MCF 10A (cell line): ENCODE measurements at regions of chr6 and their contacts with region 1.

Region 1: DNA sequence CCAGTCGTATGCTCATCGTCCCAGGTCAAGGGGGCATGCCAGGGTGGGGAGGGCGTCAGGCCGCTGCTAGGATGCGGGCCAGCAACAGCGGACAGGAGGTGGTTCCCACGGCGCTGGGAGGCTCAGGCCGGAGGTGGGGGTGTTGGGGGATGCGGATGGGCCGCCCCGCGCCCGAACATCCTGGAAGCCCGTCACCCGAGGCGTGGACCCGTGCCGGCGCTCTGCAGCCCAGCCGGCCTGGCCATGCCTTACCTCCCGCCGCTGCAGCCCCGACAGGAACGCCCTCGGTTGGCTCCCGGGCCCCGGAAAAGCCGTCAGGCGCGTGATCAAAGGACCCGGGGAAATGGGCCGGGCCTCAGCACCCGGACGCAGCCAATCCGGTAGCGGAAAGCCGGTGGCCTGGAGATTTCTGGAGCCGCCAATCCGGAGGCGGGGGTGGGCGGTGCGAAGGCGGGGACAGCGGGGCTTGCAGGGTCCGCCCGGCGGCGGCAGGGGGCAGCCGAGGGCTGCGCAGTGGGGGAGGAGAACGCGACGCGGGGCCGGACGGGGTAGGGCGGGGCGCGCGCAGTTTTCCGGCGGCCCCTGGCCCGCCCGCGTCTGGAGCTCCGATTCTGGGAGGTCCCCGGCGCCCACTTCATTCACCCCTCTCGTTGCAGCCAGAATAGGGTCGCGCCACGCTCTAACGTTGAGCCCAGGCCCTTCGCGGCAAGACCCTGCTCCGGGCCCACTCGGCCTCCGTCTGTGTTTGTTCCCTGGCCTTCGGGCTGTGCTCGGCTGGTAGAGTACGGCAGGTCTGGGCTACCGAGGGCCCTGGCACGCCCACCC is at the start of gene SMIM29:
- DNase-seq: peak; percentile 95
- H3K4me3 Mint-ChIP-seq: peak within 1 kb of the TSS; percentile 84
- H3K27ac Mint-ChIP-seq: peak within 1 kb of the TSS; percentile 88
- H3K4me1 Mint-ChIP-seq: peaks cover 33% of the 10 kb centered on the region
- H3K27me3 Mint-ChIP-seq: no peaks in the 10 kb centered on the region
- CTCF ChIP-seq: peak; percentile 95
- total RNA-seq, gene SMIM29: 12.0 and 25.7 TPM in 2 replicates

Region 2: GRCh38 chr6:34196126-34196830 is 52.7 kb before region 1 on chr6:
- CTCF ChIA-PET with region 1: interaction called, 17 read pairs
- POLR2A ChIA-PET with region 1: interaction called, 6 read pairs
- intact Hi-C with region 1: loop called (anchors 1 kb)
- DNase-seq: peak; percentile 62
- H3K4me3 Mint-ChIP-seq: peak overlapping the region; percentile 66
- H3K27ac Mint-ChIP-seq: no peak overlapping the region
- H3K4me1 Mint-ChIP-seq: peaks cover 7% of the 10 kb centered on the region
- H3K27me3 Mint-ChIP-seq: no peaks in the 10 kb centered on the region
- CTCF ChIP-seq: peak; percentile 97

Region 3: DNA sequence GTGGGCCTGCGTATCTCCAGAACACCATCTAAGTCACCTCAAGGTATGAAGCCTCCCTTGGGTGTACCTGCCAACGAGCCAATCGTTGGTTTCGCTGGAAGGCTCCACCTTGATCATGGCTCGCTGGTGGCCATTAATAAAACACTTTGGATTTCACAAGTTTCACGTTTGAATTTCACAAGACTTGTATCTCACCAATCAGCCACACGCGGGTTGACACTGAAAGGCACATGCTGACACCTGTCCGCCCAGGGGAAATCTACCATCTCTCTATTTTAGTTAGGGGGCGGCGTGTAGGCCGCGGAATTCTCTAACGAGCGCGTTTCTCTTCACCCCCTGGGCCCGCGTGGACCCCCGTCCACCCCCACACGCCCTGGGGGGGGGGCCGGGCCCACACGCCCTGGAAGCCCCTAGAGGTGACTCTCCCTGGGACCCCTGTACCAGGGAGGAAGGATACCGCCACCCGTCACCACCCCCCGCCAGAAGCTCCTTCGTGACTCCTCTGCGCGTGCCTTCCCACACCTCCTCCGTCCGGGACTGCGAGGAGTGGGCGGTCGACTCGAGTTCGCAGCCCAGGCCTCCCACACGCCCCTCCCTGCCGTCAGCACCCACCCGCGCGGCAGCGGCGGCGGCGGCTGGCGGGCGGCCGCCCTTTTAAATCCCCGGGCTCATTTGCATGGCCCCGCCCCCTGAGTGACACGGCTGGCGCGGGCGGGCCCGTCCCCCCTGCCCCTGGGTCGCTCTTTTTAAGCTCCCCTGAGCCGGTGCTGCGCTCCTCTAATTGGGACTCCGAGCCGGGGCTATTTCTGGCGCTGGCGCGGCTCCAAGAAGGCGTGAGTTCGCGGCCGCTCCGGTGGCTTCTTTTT is 12.6 kb before region 1 on chr6 and contains the start of gene HMGA1:
- CTCF ChIA-PET with region 1: interaction called, 5 read pairs
- POLR2A ChIA-PET with region 1: interaction called, 11 read pairs
- intact Hi-C with region 1: no loop called
- DNase-seq: peak; percentile 92
- H3K4me3 Mint-ChIP-seq: peak within 1 kb of the TSS; percentile 70
- H3K27ac Mint-ChIP-seq: no peak within 1 kb of the TSS
- H3K4me1 Mint-ChIP-seq: peaks cover 12% of the 10 kb centered on the region
- H3K27me3 Mint-ChIP-seq: no peaks in the 10 kb centered on the region
- CTCF ChIP-seq: no peak
- total RNA-seq, gene HMGA1: 154 and 202 TPM in 2 replicates

Region 4: GRCh38 chr6:34414999-34415858 is 166.3 kb after region 1 on chr6:
- CTCF ChIA-PET with region 1: interaction called, 41 read pairs
- POLR2A ChIA-PET with region 1: interaction called, 30 read pairs
- intact Hi-C with region 1: loop called (anchors 2 kb)
- DNase-seq: peak; percentile 68
- H3K4me3 Mint-ChIP-seq: no peak overlapping the region
- H3K27ac Mint-ChIP-seq: no peak overlapping the region
- H3K4me1 Mint-ChIP-seq: peaks cover 5% of the 10 kb centered on the region
- H3K27me3 Mint-ChIP-seq: no peaks in the 10 kb centered on the region
- CTCF ChIP-seq: peak; percentile 54

Region 5: GRCh38 chr6:34425498-34426410 is 176.8 kb after region 1 on chr6 and contains the start of gene RPS10:
- CTCF ChIA-PET with region 1: interaction called, 6 read pairs
- POLR2A ChIA-PET with region 1: interaction called, 32 read pairs
- intact Hi-C with region 1: no loop called
- DNase-seq: peak; percentile 89
- H3K4me3 Mint-ChIP-seq: peak within 1 kb of the TSS; percentile 96
- H3K27ac Mint-ChIP-seq: peak within 1 kb of the TSS; percentile 100
- H3K4me1 Mint-ChIP-seq: peaks cover 16% of the 10 kb centered on the region
- H3K27me3 Mint-ChIP-seq: no peaks in the 10 kb centered on the region
- CTCF ChIP-seq: no peak
- total RNA-seq, gene RPS10: 1,490 and 1,644 TPM in 2 replicates